Activated naive CD4-positive, alpha-beta T cell treated with anti-CD3 and anti-CD28 coated beads for 36 hours (primary cell): ENCODE measurements at regions of chr5 and their contacts with region 1.

Region 1: GRCh38 chr5:59188419-59189225 is 605.7 kb downstream of the RAB3C start:
- DNase-seq: peak; percentile 71
- H3K4me3 Mint-ChIP-seq: no peak overlapping the region
- H3K27ac Mint-ChIP-seq: no peak overlapping the region
- H3K4me1 Mint-ChIP-seq: no peaks in the 10 kb centered on the region
- H3K27me3 Mint-ChIP-seq: peaks cover 5% of the 10 kb centered on the region

Region 2: GRCh38 chr5:59358005-59358861 is 169.6 kb after region 1 on chr5:
- CTCF ChIA-PET with region 1: interaction called, 11 read pairs
- intact Hi-C with region 1: no loop called
- DNase-seq: no peak
- H3K4me3 Mint-ChIP-seq: no peak overlapping the region
- H3K27ac Mint-ChIP-seq: no peak overlapping the region
- H3K4me1 Mint-ChIP-seq: no peaks in the 10 kb centered on the region
- H3K27me3 Mint-ChIP-seq: peaks cover 9% of the 10 kb centered on the region

Region 3: GRCh38 chr5:59380350-59380951 is 191.8 kb after region 1 on chr5:
- CTCF ChIA-PET with region 1: interaction called, 58 read pairs
- intact Hi-C with region 1: loop called (anchors 1 kb)
- DNase-seq: peak; percentile 15
- H3K4me3 Mint-ChIP-seq: no peak overlapping the region
- H3K27ac Mint-ChIP-seq: no peak overlapping the region
- H3K4me1 Mint-ChIP-seq: no peaks in the 10 kb centered on the region
- H3K27me3 Mint-ChIP-seq: no peaks in the 10 kb centered on the region

Region 4: DNA sequence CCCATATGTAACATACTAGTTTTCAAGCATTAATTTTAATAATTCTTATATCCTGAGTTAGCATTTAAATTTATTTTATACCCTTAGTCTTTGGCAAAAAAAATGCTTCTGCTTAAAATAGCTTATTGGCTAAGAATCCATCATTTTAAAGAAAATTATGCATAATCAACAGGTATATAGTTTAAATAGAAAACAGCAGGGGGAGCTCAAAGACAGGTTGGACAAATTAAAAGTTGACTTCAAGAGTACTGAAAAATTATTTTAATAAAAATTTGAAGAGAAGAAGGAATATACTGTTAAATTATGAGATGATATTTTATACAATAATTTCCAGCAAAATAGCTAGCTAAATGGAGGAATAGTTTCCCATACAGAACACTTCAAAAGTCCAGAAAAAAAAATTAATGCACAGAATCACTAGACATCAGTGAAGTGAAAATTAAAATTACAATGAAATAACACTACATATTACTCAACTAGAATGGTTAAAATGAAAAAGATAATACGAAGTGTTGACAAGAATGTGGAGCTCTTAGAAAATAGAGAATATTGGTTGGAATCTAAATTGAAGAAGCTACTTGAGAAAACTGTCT is 317.8 kb after region 1 on chr5:
- CTCF ChIA-PET with region 1: no interaction called
- intact Hi-C with region 1: loop called (anchors 10 kb)
- DNase-seq: no peak
- H3K4me3 Mint-ChIP-seq: no peak overlapping the region
- H3K27ac Mint-ChIP-seq: no peak overlapping the region
- H3K4me1 Mint-ChIP-seq: no peaks in the 10 kb centered on the region
- H3K27me3 Mint-ChIP-seq: no peaks in the 10 kb centered on the region

Region 5: GRCh38 chr5:59799668-59800346 is 611.2 kb after region 1 on chr5:
- CTCF ChIA-PET with region 1: interaction called, 6 read pairs
- intact Hi-C with region 1: loop called (anchors 1 kb)
- DNase-seq: peak; percentile 30
- H3K4me3 Mint-ChIP-seq: no peak overlapping the region
- H3K27ac Mint-ChIP-seq: no peak overlapping the region
- H3K4me1 Mint-ChIP-seq: no peaks in the 10 kb centered on the region
- H3K27me3 Mint-ChIP-seq: peaks cover 7% of the 10 kb centered on the region